ENCODE measurements at regions of chr1 and their contacts with region 1.

Region 1: GRCh38 chr1:158212320-158212719 is 31.6 kb downstream of the CD1D start:
- DNase-seq: no peak
- H3K4me3 ChIP-seq: no peak overlapping the region
- H3K27ac ChIP-seq: no peak overlapping the region
- H3K4me1 ChIP-seq: no peaks in the 10 kb centered on the region
- H3K27me3 ChIP-seq: no peaks in the 10 kb centered on the region
- CTCF ChIP-seq: no peak
- EP300 ChIP-seq: no peak
- POLR2A ChIP-seq: no peak

Region 2: GRCh38 chr1:156773607-156774006 is 1438.7 kb before region 1 on chr1:
- intact Hi-C with region 1: no loop called
- DNase-seq: no peak
- H3K4me3 ChIP-seq: no peak overlapping the region
- H3K27ac ChIP-seq: no peak overlapping the region
- H3K4me1 ChIP-seq: peaks cover 10% of the 10 kb centered on the region
- H3K27me3 ChIP-seq: no peaks in the 10 kb centered on the region
- CTCF ChIP-seq: no peak
- EP300 ChIP-seq: no peak
- POLR2A ChIP-seq: no peak

Region 3: DNA sequence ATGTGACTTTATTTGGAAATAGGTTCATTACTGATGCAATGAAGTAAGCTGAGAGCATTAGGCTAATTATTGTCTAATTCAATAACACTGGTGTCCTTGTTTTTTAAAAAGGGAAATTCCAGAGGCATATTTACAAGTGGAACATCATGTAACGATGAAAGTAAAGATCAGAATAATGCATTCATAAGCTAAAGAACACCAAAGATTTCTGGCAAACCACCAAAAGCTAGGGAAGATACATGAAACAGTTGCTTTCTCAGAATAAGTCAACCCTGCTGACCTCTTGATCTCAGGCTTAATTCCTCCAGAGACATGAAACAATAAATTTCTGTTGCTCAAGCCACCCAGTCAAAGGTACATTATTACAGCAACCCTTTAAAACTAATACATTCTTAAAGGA is 777.1 kb after region 1 on chr1:
- intact Hi-C with region 1: loop called in 1 of 4 experiments (anchors 10 kb)
- DNase-seq: no peak
- H3K4me3 ChIP-seq: no peak overlapping the region
- H3K27ac ChIP-seq: no peak overlapping the region
- H3K4me1 ChIP-seq: no peaks in the 10 kb centered on the region
- H3K27me3 ChIP-seq: no peaks in the 10 kb centered on the region
- CTCF ChIP-seq: no peak
- EP300 ChIP-seq: no peak
- POLR2A ChIP-seq: no peak

Measured in ovary (tissue), 10 donors.